ENCODE measurements at regions of chr2 and their contacts with region 1.

Region 1: GRCh38 chr2:42095923-42096408 is 48.1 kb downstream of the PKDCC start:
- H3K4me3 ChIP-seq: no peak overlapping the region
- H3K27ac ChIP-seq: no peak overlapping the region
- H3K4me1 ChIP-seq: peaks cover 4% of the 10 kb centered on the region; the same call in 1 of the 2 replicates
- CTCF ChIP-seq: peak; percentile 58; the same call in 1 of the 2 replicates

Region 2: GRCh38 chr2:41572164-41572563 is 523.8 kb before region 1 on chr2:
- CTCF ChIA-PET with region 1: no interaction called
- POLR2A ChIA-PET with region 1: no interaction called
- H3K4me3 ChIP-seq: no peak overlapping the region
- H3K27ac ChIP-seq: no peak overlapping the region
- H3K4me1 ChIP-seq: no peaks in the 10 kb centered on the region
- CTCF ChIP-seq: no peak

Region 3: DNA sequence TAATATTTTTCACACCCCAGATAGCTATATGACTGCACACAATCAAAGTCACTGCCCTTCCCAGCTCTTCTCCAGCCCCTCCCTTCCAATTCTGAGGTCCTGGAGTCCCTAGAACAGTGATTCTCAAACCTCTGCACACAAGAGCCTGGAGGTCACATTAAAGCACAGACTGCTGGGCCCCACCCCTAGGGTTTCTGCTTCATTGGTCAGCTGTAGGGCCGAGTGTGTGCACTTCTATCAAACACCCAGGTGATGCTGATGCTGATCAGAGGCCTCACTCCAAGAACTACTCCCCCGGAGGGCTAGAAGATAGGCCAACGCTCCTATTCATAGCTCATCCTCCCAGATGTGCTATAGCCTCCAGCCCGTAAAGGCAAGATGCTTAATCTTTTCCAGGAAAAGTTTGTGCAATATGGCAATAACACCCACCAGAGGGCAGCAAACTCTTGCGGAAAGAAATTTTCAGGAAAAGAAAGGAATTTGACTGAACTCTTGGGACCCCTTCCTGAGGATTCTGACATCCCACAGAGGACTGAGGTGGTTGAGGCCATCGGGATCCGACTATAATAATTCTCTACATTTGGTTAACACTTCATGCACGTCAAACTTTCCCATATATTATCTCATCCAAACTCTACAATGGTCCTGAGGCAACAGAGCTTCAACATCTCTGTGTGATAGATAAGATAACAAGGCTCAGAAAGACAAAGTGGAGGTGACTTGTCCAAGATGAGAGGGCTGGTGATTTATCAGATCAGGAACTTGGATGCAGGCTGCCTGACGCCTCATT is 242.3 kb before region 1 on chr2:
- CTCF ChIA-PET with region 1: interaction called, 214 read pairs
- POLR2A ChIA-PET with region 1: no interaction called
- H3K4me3 ChIP-seq: no peak overlapping the region
- H3K27ac ChIP-seq: no peak overlapping the region
- H3K4me1 ChIP-seq: no peaks in the 10 kb centered on the region
- CTCF ChIP-seq: peak; percentile 43

Region 4: GRCh38 chr2:41972819-41973218 is 123.1 kb before region 1 on chr2:
- CTCF ChIA-PET with region 1: no interaction called
- POLR2A ChIA-PET with region 1: no interaction called
- H3K4me3 ChIP-seq: no peak overlapping the region
- H3K27ac ChIP-seq: no peak overlapping the region
- H3K4me1 ChIP-seq: no peaks in the 10 kb centered on the region
- CTCF ChIP-seq: no peak

Region 5: GRCh38 chr2:42060718-42061619 is 35.0 kb before region 1 on chr2:
- CTCF ChIA-PET with region 1: no interaction called
- POLR2A ChIA-PET with region 1: no interaction called
- H3K4me3 ChIP-seq: no peak overlapping the region
- H3K27ac ChIP-seq: no peak overlapping the region
- H3K4me1 ChIP-seq: peaks cover 18% of the 10 kb centered on the region
- CTCF ChIP-seq: no peak

Region 6: DNA sequence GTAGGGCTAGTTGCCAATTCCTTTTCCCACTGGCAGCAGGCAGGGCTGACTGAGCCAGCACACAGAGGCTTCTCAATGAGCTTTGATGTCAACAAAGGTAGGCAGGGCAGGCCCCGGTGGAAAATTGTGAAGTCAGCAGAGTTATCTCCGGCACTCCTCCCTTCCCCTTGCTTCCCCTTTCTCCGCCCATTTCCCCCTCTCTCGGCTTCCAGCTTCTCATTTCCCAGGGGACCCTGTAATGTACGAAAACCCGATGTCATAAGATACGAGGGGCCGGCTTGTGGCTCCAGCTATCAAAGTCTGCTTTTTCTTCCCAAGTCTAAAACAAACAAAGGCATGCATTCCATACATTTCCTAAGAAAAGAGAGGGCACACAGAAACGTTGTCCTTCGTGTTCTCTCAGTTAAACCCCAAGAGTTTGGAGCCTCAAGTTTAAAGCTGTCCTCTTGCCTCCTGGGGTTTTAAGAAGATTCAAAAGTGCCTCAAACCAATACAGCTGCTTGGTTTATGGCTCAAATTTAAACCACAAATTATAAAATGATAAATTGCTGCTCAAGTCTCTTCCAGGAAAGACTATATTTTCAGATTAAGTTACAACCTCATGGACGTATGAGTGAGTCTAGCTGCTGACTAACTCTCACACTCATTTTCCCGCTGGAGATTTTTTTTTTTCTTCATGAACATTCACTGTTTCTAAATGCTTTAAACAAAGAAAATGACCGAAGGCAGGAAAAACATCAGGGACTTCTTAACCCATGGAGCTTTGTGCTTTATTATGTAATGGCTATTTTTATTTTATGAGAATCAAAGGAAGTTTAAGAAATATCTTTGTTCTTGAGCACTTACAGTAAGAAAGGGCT is 46.0 kb after region 1 on chr2:
- CTCF ChIA-PET with region 1: interaction called, 10 read pairs
- POLR2A ChIA-PET with region 1: no interaction called
- H3K4me3 ChIP-seq: peak overlapping the region; percentile 19
- H3K27ac ChIP-seq: peak overlapping the region; percentile 96
- H3K4me1 ChIP-seq: peaks cover 29% of the 10 kb centered on the region
- CTCF ChIP-seq: no peak

Region 7: GRCh38 chr2:42171396-42171980 is 75.5 kb after region 1 on chr2:
- CTCF ChIA-PET with region 1: interaction called, 23 read pairs
- POLR2A ChIA-PET with region 1: no interaction called
- H3K4me3 ChIP-seq: peak overlapping the region; percentile 4
- H3K27ac ChIP-seq: peak overlapping the region; percentile 59
- H3K4me1 ChIP-seq: peaks cover 26% of the 10 kb centered on the region
- CTCF ChIP-seq: no peak

Region 8: DNA sequence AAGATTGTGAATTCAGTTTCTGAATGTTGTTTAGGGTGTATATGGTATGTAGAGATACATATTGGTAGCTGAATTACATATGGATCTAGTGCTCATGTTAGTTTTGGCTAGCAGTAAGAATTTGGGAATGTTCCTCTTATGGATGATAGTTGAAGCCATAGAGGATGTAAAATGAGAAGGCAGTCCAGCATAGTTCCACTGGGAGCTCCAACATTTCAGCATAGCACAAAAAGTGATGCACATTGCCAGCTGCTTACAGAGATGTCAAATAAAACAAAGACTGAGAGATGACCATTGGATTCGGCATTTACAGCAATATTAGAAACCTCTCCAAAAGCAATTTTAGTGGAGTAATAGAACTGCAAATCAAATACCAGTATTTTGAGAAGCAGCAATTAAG is 150.6 kb after region 1 on chr2:
- CTCF ChIA-PET with region 1: interaction called, 14 read pairs
- POLR2A ChIA-PET with region 1: interaction called, 3 read pairs
- H3K4me3 ChIP-seq: no peak overlapping the region
- H3K27ac ChIP-seq: no peak overlapping the region
- H3K4me1 ChIP-seq: peaks cover 13% of the 10 kb centered on the region
- CTCF ChIP-seq: no peak

Region 9: GRCh38 chr2:42348113-42348805 is 252.3 kb after region 1 on chr2:
- CTCF ChIA-PET with region 1: no interaction called
- POLR2A ChIA-PET with region 1: no interaction called
- H3K4me3 ChIP-seq: no peak overlapping the region
- H3K27ac ChIP-seq: no peak overlapping the region
- H3K4me1 ChIP-seq: no peaks in the 10 kb centered on the region
- CTCF ChIP-seq: no peak

Measured in HEK293 (cell line).